OCI-LY7 (cell line): ENCODE measurements at regions of chr2 and their contacts with region 1.

Region 1: GRCh38 chr2:233832869-233833311 is 21.4 kb downstream of the HJURP start:
- DNase-seq: peak; percentile 38
- H3K4me3 ChIP-seq: no peak overlapping the region
- H3K27ac ChIP-seq: no peak overlapping the region
- H3K4me1 ChIP-seq: peaks cover 10% of the 10 kb centered on the region
- CTCF ChIP-seq: peak; percentile 60

Region 2: GRCh38 chr2:233711312-233712008 is 121.4 kb before region 1 on chr2:
- CTCF ChIA-PET with region 1: no interaction called
- POLR2A ChIA-PET with region 1: no interaction called
- intact Hi-C with region 1: loop called (anchors 5 kb)
- DNase-seq: peak; percentile 71
- H3K4me3 ChIP-seq: no peak overlapping the region
- H3K27ac ChIP-seq: no peak overlapping the region
- H3K4me1 ChIP-seq: no peaks in the 10 kb centered on the region
- CTCF ChIP-seq: peak; percentile 94